ENCODE measurements at regions of chr7 and their contacts with region 1.

Region 1: GRCh38 chr7:91034459-91035368 is 229.5 kb upstream of the FZD1 start:
- DNase-seq: peak; percentile 66
- H3K4me3 Mint-ChIP-seq: no peak overlapping the region
- H3K27ac Mint-ChIP-seq: no peak overlapping the region
- H3K4me1 Mint-ChIP-seq: no peaks in the 10 kb centered on the region
- H3K27me3 Mint-ChIP-seq: peaks cover 4% of the 10 kb centered on the region

Region 2: DNA sequence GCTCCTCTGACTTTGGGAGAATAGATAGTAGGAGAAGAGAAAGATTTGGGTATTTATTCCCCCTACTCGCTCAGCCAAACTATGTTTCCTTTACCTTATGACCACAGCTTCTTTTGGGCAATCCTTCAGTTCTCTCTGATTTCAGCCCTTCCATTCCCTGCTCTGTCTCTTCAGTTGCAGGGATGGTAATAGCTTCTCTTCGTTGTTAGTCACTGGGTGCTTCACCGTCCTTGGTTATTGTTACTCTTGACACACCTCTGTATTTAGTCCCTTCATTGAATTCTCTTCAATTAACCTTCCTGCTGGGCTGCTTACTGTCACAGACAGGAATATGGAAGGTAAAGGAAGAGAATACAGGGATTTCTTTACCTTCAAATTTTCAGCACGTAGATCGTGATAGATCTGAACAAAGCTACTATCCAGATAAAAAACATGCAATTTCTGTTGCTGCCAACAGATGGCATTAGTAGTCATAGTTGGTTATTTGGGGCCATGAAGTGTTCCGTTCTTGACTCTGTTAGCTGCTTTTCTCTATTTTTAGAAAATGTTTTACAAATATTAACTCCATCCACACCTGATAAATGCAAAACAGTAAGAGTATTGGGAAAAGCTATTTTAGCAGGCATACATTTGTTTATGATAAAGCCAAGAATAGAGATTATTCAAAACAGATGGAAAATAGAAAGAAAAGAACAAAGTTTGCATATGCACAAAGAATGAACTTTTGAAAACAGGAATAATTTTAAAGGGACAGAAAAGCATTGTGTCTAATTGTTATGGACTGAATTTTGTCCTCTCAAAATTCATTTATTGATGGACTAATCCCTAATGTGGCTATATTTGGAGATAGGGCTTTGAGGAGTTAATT is 579.3 kb before region 1 on chr7:
- intact Hi-C with region 1: loop called (anchors 1 kb)
- DNase-seq: peak; percentile 69
- H3K4me3 Mint-ChIP-seq: no peak overlapping the region
- H3K27ac Mint-ChIP-seq: no peak overlapping the region
- H3K4me1 Mint-ChIP-seq: peaks cover 5% of the 10 kb centered on the region
- H3K27me3 Mint-ChIP-seq: peaks cover 13% of the 10 kb centered on the region

Region 3: DNA sequence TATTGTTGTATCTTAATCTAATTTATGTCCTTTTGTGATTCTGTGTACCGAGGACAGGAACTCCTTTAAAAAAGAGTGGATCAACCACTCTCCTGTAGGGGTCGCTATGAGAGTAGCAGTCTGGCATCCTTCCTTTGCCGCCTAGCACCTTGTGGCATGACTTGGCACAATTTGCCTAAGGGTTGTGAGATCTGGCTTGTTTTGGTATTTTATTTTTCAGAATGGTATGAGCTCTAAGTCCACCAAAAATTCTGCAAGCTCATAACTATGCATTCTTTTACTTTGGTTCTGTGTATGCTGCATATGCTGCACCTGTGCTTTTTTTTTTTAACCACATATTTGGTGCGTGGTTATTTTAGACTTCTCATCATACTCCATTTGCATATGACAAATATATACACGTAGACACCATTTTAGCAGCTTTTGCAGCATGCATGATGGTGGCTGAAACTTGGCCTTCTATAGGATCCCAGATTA is 325.8 kb before region 1 on chr7:
- intact Hi-C with region 1: loop called (anchors 5 kb)
- DNase-seq: peak; percentile 57
- H3K4me3 Mint-ChIP-seq: no peak overlapping the region
- H3K27ac Mint-ChIP-seq: no peak overlapping the region
- H3K4me1 Mint-ChIP-seq: no peaks in the 10 kb centered on the region
- H3K27me3 Mint-ChIP-seq: peaks cover 2% of the 10 kb centered on the region

Region 4: DNA sequence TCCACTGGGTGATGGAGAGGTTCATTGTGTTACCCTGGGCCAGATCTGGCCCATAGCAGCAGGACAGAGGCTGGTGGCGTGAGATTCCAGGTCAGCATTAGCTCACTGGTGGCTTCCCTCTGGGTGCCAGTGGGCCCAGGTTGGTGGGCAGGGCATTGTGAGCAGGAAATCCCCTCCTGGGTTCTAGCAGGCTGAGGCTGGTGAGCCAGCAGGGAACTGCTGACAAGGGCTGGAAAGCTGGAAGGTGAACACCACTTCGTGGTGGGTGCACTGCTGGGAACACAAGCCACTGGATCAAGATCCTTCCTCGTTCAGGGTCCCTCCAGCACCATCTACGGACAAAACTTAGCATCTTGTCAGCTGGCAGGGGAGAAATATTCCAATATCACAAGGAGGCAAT is 29.7 kb before region 1 on chr7:
- intact Hi-C with region 1: no loop called
- DNase-seq: no peak
- H3K4me3 Mint-ChIP-seq: no peak overlapping the region
- H3K27ac Mint-ChIP-seq: no peak overlapping the region
- H3K4me1 Mint-ChIP-seq: no peaks in the 10 kb centered on the region
- H3K27me3 Mint-ChIP-seq: peaks cover 2% of the 10 kb centered on the region

Measured in activated CD4-positive, alpha-beta T cell treated with anti-CD3 and anti-CD28 coated beads, Interleukin-2, amount 10 ng/mL, durations not matched to agents 24 days and 14 days (primary cell).